ENCODE measurements at regions of chr10 and their contacts with region 1.

Region 1: GRCh38 chr10:97037365-97038361 is 148.1 kb downstream of the SLIT1 start:
- DNase-seq: no peak
- H3K4me3 ChIP-seq: peak overlapping the region; percentile 26 to 68 (median 42)
- H3K27ac ChIP-seq: peak overlapping the region in 1 of 4 donors; percentile 41
- H3K4me1 ChIP-seq: peaks cover 8 to 12% (median 8%) of the 10 kb centered on the region in 3 donors
- H3K27me3 ChIP-seq: peaks cover 0 to 18% (median 0%) of the 10 kb centered on the region in 4 donors
- CTCF ChIP-seq: peak; percentile 75 to 89 (median 83)
- POLR2A ChIP-seq: no peak

Region 2: DNA sequence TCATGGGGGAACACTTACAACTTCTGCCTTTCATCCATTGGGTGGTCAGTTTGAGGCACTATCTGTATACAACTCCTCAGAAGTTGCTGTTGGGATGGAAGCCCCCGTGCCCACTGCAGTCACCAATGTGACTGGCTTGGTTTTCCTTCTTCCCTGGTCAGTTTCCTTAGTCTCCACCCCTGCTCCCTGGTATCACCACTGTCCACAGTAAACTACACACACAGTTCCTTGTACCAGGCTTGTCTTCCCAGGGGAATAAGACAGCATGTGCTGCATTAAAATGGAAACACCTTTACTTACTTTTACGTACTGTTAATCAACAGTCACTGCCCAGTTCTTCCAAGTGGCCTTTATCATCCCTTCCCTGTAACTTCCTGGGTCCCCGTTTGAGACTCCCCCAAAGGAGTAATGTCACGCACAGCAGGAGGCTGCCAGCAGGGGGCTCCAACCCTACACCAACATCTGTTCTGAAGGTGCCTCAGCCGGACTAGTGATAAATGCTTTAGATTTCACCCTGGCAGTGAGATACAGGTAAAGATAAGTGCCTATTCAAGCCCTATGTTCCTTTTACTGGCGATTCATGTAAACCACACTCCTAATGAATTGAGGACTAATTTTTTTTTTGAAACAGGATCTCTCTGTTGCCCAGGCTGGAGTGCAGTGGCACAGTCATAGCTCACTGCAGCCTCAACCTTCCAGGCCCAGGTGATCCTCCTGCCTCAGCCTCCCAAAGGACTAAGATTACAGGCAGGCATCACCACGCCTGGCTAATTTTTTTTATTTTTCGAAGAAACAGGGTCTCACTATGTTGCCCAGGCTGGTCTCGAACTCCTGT is 272.0 kb before region 1 on chr10:
- intact Hi-C with region 1: loop called (anchors 10 kb)
- DNase-seq: no peak
- H3K4me3 ChIP-seq: no peak overlapping the region
- H3K27ac ChIP-seq: no peak overlapping the region
- H3K4me1 ChIP-seq: no peaks in the 10 kb centered on the region
- H3K27me3 ChIP-seq: peaks cover 0 to 9% (median 0%) of the 10 kb centered on the region in 4 donors
- CTCF ChIP-seq: peak; percentile 60 to 77 (median 73)
- POLR2A ChIP-seq: no peak